ENCODE measurements at regions of chr16 and their contacts with region 1.

Region 1: DNA sequence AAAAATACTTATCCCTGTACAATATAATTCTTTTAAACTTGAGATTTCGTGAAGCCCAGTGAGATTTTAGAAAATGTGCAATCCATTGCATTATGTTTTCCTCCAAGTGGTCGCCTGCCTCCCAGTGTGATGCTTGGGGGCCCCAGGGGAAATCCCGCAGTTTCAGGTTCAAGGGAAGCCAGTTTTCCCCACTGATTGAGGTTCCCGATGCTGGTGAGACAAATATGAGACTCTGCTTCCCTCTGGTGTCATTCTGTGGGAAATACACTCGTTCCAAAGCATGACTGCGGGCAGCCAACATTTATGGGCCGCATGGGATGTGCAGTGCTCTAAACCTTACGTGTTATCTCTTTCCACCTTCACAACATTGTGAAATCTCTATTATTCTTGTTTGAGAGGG is 200.8 kb downstream of the PRKCB start:
- DNase-seq: no peak
- ATAC-seq: peak; percentile 57

Region 2: DNA sequence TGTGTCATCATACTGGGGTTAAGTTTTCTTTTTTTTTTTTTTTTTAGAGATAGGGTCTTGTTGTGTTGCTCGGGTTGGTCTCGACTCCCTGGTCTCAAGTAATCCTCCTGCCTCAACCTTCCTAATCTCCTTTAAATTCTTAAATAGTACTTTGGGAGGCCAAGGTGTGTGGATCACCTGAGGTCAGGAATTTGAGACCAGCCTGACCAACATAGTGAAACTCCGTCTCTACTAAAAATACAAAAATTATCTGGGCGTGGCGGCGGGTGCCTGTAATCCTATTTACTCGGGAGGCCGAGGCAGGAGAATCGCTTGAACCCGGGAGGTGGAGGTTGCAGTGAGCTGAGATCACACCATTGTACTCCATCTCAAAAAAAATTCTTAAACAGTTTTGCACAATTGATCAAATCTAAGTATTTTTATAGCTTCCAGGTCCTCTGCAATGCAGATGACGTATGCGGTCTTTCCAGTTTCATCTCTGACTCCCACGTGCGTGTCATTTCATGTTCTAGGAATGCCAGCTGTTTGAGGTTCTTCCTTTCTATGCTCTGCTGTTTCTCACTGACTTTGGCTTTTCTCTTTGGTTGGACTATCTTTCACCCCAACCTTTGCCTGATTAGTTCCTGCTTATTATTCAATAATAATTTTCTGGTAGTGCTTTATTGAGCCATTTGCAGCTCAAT is 265.7 kb before region 1 on chr16:
- intact Hi-C with region 1: no loop called
- DNase-seq: no peak
- ATAC-seq: no peak

Region 3: DNA sequence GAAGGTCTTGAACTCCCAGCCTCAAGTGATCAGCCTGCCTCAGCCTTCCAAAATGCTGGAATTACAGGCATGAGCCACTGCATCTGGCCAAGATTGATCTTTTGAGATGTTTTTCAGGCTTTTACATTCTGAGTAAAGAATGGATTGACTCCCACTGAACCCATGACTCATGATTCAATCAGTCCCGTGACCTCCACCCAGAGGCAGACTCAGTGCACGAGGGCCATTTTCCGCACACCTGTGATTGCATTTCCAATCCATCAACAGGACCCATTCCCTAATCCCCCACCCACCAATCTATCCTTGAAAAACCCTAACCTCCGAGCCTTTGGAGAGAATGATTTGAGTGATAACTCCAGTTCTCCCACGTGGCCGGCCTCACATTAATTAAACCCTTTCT is 241.2 kb before region 1 on chr16:
- intact Hi-C with region 1: loop called (anchors 10 kb)
- DNase-seq: no peak
- ATAC-seq: no peak

Region 4: DNA sequence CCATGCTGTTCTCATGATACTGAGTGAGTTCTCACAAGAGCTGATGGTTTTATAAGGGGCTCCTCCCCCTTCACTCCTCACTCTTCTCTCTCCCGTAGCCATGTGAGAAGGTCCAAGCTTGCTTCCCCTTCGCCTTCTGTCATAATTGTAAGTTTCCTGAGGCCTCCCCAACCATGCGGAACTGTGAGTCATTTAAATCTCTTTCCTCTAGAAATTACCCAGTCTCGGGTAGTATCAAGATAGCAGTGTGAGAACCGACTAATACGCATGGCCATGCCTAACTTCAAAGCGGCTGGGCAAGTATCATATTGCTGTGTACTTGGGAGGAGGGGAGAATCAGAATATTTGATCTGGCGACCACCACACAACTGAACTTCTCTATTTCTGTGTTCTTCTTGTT is 112.5 kb before region 1 on chr16:
- intact Hi-C with region 1: no loop called
- DNase-seq: no peak
- ATAC-seq: no peak

Region 5: GRCh38 chr16:24270721-24271120 is 234.1 kb after region 1 on chr16:
- intact Hi-C with region 1: no loop called
- DNase-seq: no peak
- ATAC-seq: no peak

Measured in Right ventricle myocardium superior (tissue), 1 donor.